HEK293 (cell line): ENCODE measurements at regions of chr14 and their contacts with region 1.

Region 1: DNA sequence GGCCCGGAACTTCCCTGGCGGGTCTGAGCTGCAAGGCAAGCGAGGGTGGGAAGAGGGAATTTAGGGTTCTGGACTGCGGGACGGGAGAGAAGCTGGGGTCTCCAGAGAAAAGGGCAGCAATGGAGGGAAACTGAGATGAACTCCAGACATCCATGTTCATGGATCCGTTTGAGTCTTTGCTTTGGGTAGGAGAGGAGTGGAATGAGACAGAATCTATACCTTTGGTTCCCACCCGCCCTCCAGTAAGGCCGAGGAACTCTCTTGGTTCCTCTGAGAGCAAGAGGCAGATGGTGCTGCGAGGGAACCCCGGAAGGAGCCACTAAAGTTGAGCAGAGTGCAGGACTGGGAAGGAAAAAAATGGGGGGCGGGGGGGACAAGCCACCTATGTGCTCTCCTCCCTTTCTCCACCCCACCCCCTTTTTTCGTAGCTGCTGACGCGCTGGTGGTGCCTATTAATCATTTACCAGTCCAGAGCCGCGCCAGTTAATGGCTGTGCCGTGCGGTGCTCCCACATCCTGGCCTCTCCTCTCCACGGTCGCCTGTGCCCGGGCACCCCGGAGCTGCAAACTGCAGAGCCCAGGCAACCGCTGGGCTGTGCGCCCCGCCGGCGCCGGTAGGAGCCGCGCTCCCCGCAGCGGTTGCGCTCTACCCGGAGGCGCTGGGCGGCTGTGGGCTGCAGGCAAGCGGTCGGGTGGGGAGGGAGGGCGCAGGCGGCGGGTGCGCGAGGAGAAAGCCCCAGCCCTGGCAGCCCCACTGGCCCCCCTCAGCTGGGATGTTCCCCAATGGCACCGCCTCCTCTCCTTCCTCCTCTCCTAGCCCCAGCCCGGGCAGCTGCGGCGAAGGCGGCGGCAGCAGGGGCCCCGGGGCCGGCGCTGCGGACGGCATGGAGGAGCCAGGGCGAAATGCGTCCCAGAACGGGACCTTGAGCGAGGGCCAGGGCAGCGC is 1.2 kb downstream of the SSTR1 start:
- H3K4me3 ChIP-seq: peak overlapping the region; percentile 26
- H3K27ac ChIP-seq: no peak overlapping the region
- H3K4me1 ChIP-seq: no peaks in the 10 kb centered on the region; the same call in 1 of the 2 replicates
- CTCF ChIP-seq: no peak

Region 2: DNA sequence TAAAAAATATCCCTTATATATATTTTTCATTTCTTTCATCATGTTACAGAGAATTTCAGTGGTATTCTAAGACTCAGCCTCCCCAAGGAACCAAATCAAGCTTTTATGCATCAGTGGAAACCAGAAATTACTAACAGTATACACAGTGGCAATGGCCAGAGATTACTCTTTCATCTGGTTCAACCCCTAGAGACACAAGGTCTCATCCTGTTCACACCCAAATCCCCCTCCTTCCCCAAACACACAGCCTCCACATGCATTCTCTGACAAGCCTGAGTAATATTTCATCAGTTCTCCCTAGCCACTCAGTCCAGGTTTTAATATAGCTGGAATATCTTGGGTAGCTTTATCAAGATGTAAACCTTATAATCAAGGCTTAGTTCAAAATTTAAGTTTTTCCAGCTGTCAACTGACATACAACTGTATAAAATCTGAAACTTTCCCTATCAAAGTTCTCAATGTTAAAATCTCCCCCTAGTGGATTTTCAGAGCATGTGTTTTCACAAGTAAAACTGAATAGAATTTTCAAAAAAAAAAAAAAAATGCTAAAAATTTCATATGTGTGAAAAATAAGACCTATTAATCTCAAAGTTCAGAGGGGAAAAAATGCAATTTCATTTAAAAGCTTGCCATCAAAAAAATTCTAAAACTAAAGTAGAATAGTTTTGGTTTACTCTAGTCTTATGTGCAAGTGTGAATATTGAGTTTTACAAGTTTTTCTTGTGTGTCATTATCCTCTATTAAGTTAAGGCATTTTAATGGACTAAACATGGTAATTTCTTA is 11.7 kb before region 1 on chr14:
- CTCF ChIA-PET with region 1: interaction called, 20 read pairs
- POLR2A ChIA-PET with region 1: no interaction called
- H3K4me3 ChIP-seq: no peak overlapping the region
- H3K27ac ChIP-seq: no peak overlapping the region
- H3K4me1 ChIP-seq: no peaks in the 10 kb centered on the region
- CTCF ChIP-seq: no peak